Heart left ventricle (tissue), 16 donors: ENCODE measurements at regions of chr2 and their contacts with region 1.

Region 1: DNA sequence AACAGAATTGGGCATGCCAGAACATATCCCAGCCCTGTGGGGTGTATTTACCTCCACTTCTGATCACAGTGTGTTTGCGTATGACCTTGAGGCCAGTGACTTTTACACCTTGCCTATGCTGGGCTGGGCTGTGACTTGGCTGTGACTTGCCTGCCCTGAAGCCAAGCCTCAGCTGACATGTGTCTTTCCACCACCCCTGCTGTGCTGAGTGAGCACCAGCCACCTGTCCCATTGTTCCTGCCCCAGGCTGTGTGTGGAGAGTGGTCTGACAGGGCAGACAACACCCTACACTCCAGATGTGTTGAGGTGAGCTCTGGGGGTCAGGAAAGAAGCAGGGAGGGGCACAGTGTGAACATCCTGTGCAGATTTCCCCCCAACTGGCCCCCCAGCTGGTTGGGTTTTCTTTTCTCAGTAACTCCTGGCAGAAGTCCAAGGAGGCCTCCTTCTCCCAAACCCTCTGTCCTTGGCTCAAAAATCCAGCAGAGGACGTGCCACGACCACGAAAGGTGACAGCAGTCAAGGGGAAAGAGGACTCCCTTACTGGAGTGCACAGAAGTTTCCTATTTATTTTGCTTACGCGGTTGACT is 5.1 kb upstream of the STEAP3 start:
- DNase-seq: peak; percentile 23 to 64 (median 51)
- ATAC-seq: peak in 3 of 4 donors; percentile 49 to 56 (median 50)
- H3K4me3 ChIP-seq: no peak overlapping the region
- H3K27ac ChIP-seq: no peak overlapping the region
- H3K4me1 ChIP-seq: peaks cover 0 to 16% (median 4%) of the 10 kb centered on the region in 12 donors
- H3K27me3 ChIP-seq: no peaks in the 10 kb centered on the region
- CTCF ChIP-seq: peak; percentile 8 to 61 (median 48)
- POLR2A ChIP-seq: no peak

Region 2: GRCh38 chr2:119248311-119248710 is 29.7 kb after region 1 on chr2:
- intact Hi-C with region 1: no loop called
- DNase-seq: no peak
- ATAC-seq: no peak
- H3K4me3 ChIP-seq: no peak overlapping the region
- H3K27ac ChIP-seq: no peak overlapping the region
- H3K4me1 ChIP-seq: no peaks in the 10 kb centered on the region
- H3K27me3 ChIP-seq: no peaks in the 10 kb centered on the region
- CTCF ChIP-seq: no peak
- POLR2A ChIP-seq: no peak

Region 3: GRCh38 chr2:119276864-119277263 is 58.3 kb after region 1 on chr2:
- intact Hi-C with region 1: no loop called
- DNase-seq: no peak
- ATAC-seq: no peak
- H3K4me3 ChIP-seq: no peak overlapping the region
- H3K27ac ChIP-seq: no peak overlapping the region
- H3K4me1 ChIP-seq: peaks cover 0 to 4% (median 0%) of the 10 kb centered on the region in 12 donors
- H3K27me3 ChIP-seq: no peaks in the 10 kb centered on the region
- CTCF ChIP-seq: no peak
- POLR2A ChIP-seq: no peak

Region 4: DNA sequence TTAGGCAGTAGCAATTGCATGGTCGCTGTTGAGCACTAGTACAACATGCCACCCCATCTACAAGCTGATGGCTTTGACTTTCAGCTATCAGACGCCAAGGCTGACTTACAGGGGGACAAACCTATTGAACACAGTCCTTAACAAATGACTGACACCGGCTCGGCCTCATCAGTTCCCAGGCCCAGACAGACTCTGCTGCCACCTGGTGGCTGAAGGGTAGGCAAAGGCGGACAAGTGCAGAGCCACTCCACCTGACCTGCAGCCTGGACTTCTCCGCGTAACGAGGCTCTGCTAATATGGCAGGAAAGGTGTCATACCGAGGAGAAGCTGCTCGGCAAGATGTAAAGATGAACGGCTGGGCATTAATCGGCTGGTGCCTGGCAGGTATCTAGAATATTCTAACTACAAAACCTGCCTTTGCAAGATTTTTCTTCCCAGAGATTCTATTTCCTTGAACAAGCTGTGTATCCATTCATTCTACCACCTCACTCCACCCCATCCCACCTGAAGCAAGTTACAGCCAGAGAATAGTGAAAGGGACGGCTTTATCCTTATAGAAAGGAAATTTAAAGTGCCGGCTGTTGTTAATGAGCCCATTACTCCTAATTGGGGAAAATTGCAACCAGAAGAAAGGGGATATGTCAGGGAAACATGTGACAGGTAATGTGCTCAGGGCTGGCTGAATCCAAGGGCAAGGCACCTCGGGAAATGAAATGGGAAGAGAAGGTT is 72.5 kb after region 1 on chr2:
- intact Hi-C with region 1: loop called in 3 of 10 experiments (anchors 2 to 5 kb)
- DNase-seq: peak; percentile 68 to 93 (median 89)
- ATAC-seq: peak; percentile 29 to 95 (median 90)
- H3K4me3 ChIP-seq: no peak overlapping the region
- H3K27ac ChIP-seq: no peak overlapping the region
- H3K4me1 ChIP-seq: peaks cover 0 to 15% (median 7%) of the 10 kb centered on the region in 12 donors
- H3K27me3 ChIP-seq: no peaks in the 10 kb centered on the region
- CTCF ChIP-seq: peak; percentile 49 to 97 (median 92)
- POLR2A ChIP-seq: no peak

Region 5: DNA sequence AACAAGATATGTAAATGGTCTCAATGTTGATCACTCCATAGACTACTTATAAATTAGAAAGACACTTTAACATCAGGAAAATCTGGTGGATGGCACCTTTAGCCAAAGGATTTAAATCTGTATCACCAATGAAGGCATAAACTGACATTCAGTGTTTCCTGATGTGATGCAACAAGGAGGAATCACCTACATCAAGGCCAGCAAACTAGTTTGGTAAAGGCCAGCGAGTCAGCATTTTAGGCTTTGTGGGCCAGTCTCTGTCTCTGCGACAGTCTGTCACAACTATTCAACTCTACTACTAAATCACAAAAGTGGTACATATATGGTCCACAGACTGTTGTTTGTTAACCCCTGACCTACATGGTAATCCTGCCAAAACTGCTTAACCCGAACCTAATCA is 114.8 kb after region 1 on chr2:
- intact Hi-C with region 1: no loop called
- DNase-seq: no peak
- ATAC-seq: no peak
- H3K4me3 ChIP-seq: no peak overlapping the region
- H3K27ac ChIP-seq: no peak overlapping the region
- H3K4me1 ChIP-seq: no peaks in the 10 kb centered on the region
- H3K27me3 ChIP-seq: no peaks in the 10 kb centered on the region
- CTCF ChIP-seq: no peak
- POLR2A ChIP-seq: no peak

Region 6: DNA sequence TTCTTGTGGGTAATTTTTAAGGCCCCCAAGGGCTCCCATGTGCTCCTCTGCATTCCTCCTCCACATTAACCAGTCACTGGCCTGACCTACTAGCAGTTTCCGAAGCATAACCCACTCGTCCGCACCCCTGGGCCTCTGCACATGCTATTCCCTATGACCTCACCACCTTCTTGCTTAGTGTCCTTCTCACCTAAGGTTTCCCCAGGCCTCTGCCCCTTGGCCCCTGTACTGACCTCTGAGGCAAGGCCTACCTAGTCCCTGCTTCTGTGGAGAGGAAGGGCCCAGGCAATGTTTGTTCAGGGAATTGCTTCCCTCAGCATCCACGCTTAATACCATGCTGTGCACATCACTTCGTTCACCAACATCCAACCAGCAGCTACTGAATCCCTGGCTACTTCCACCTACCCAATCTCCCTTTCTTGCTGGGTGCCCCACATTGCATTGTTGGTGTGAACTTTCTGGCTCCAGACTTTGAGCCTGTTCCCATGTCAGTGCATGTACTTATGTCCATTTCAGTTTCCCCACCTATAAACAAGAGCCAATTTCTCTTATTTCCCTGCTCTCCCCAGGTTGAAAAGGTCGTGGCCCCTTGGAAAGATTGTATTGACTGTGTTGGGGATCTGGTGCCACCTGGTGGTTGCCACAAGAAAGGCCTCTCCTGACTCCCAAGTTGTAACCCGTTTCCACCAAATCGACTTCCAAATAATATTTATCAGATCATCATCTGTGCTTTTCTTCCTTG is 441.2 kb after region 1 on chr2:
- intact Hi-C with region 1: loop called in 1 of 10 experiments (anchors 5 kb)
- DNase-seq: peak in 2 of 5 donors; percentile 25 to 43
- ATAC-seq: peak in 2 of 4 donors; percentile 36 to 43
- H3K4me3 ChIP-seq: no peak overlapping the region
- H3K27ac ChIP-seq: no peak overlapping the region
- H3K4me1 ChIP-seq: peaks cover 0 to 7% (median 0%) of the 10 kb centered on the region in 12 donors
- H3K27me3 ChIP-seq: no peaks in the 10 kb centered on the region
- CTCF ChIP-seq: peak; percentile 76 to 89 (median 83)
- POLR2A ChIP-seq: no peak